ENCODE measurements at regions of chr3 and their contacts with region 1.

Region 1: GRCh38 chr3:104521606-104522336 is 844.9 kb upstream of the ALCAM start:
- DNase-seq: peak; percentile 85
- ATAC-seq: peak; percentile 58
- H3K4me3 ChIP-seq: peak overlapping the region in 1 of 5 experiments; percentile 12
- H3K4me3 Mint-ChIP-seq: peak overlapping the region; percentile 82
- H3K27ac ChIP-seq: peak overlapping the region; percentile 93 to 98
- H3K27ac Mint-ChIP-seq: peak overlapping the region; percentile 98
- H3K4me1 ChIP-seq: peaks cover 70 to 71% of the 10 kb centered on the region in 2 donors
- H3K4me1 Mint-ChIP-seq: peaks cover 69% of the 10 kb centered on the region
- H3K27me3 ChIP-seq: no peaks in the 10 kb centered on the region
- H3K27me3 Mint-ChIP-seq: no peaks in the 10 kb centered on the region
- CTCF ChIP-seq: no peak

Region 2: GRCh38 chr3:104069114-104069513 is 452.7 kb before region 1 on chr3:
- CTCF ChIA-PET with region 1: no interaction called
- POLR2A ChIA-PET with region 1: no interaction called
- intact Hi-C with region 1: no loop called
- DNase-seq: no peak
- ATAC-seq: no peak
- H3K4me3 ChIP-seq: no peak overlapping the region
- H3K4me3 Mint-ChIP-seq: no peak overlapping the region
- H3K27ac ChIP-seq: no peak overlapping the region
- H3K27ac Mint-ChIP-seq: no peak overlapping the region
- H3K4me1 ChIP-seq: no peaks in the 10 kb centered on the region
- H3K4me1 Mint-ChIP-seq: no peaks in the 10 kb centered on the region
- H3K27me3 ChIP-seq: no peaks in the 10 kb centered on the region
- H3K27me3 Mint-ChIP-seq: no peaks in the 10 kb centered on the region
- CTCF ChIP-seq: no peak

Region 3: DNA sequence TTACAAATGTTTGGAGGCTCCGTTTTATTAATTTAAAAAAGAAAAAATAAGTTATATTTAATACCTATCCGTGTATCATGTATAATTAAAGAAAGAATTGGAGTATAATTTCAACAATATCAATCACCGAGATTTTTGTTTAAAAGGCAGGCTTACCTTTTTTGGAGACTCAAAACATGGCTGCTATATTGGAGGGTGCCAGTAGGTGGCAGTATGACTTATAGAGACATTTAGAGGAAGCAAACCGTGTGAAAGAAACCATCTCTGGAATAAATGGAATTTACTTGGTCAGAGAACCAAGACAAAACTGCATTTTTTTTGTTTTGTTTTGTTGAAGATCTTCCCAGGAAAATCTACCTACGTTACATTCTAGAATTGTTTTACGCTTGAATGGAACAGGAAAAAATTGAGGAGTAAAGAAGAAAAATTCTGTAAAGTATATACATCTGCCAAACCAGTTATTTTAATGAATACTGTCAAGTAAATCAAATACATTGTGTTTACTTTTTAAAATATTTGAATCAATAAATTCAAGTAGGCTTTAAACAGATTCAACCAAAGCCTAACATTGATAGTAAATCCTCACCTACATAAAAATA is 42.4 kb after region 1 on chr3:
- CTCF ChIA-PET with region 1: interaction called, 3 read pairs
- POLR2A ChIA-PET with region 1: no interaction called
- intact Hi-C with region 1: loop called (anchors 5 kb)
- DNase-seq: peak; percentile 56
- ATAC-seq: peak; percentile 47
- H3K4me3 ChIP-seq: no peak overlapping the region
- H3K4me3 Mint-ChIP-seq: no peak overlapping the region
- H3K27ac ChIP-seq: no peak overlapping the region
- H3K27ac Mint-ChIP-seq: no peak overlapping the region
- H3K4me1 ChIP-seq: no peaks in the 10 kb centered on the region
- H3K4me1 Mint-ChIP-seq: peaks cover 8% of the 10 kb centered on the region
- H3K27me3 ChIP-seq: no peaks in the 10 kb centered on the region
- H3K27me3 Mint-ChIP-seq: no peaks in the 10 kb centered on the region
- CTCF ChIP-seq: peak; percentile 77

Region 4: DNA sequence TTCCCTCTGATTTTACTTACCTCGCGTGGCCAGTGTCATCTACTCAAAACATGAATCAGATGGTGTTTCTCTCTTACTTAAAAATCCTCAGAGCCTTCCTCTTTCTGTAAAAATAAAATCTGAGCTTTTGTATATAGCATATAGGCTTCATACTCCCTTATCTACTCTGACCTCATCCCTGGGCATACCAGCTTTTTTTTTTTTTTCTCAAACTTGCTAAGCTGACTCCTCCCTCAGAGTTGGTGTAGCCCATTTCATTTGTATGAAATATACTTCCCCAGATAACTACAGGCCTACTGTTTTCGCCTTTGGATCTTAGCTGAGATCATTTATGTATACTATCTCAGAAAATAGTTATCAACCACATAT is 196.0 kb after region 1 on chr3:
- CTCF ChIA-PET with region 1: no interaction called
- POLR2A ChIA-PET with region 1: no interaction called
- intact Hi-C with region 1: loop called (anchors 1 kb)
- DNase-seq: peak; percentile 57
- ATAC-seq: peak; percentile 58
- H3K4me3 ChIP-seq: peak overlapping the region in 2 of 5 experiments; percentile 32 to 39
- H3K4me3 Mint-ChIP-seq: peak overlapping the region; percentile 72
- H3K27ac ChIP-seq: peak overlapping the region; percentile 74 to 84
- H3K27ac Mint-ChIP-seq: peak overlapping the region; percentile 89
- H3K4me1 ChIP-seq: peaks cover 12 to 14% of the 10 kb centered on the region in 2 donors
- H3K4me1 Mint-ChIP-seq: peaks cover 22% of the 10 kb centered on the region
- H3K27me3 ChIP-seq: no peaks in the 10 kb centered on the region
- H3K27me3 Mint-ChIP-seq: no peaks in the 10 kb centered on the region
- CTCF ChIP-seq: no peak